ENCODE measurements at regions of chr16 and their contacts with region 1.

Region 1: GRCh38 chr16:50266337-50267091 is at the start of gene ADCY7:
- DNase-seq: peak; percentile 58 to 90 (median 88)
- ATAC-seq: peak; percentile 83
- H3K4me3 ChIP-seq: peak within 1 kb of the TSS; percentile 91 to 94
- H3K4me3 Mint-ChIP-seq: peak within 1 kb of the TSS; percentile 97
- H3K27ac ChIP-seq: peak within 1 kb of the TSS; percentile 77 to 86
- H3K27ac Mint-ChIP-seq: peak within 1 kb of the TSS; percentile 98
- H3K4me1 ChIP-seq: peaks cover 68% of the 10 kb centered on the region
- H3K4me1 Mint-ChIP-seq: peaks cover 71% of the 10 kb centered on the region
- H3K27me3 ChIP-seq: no peaks in the 10 kb centered on the region
- H3K27me3 Mint-ChIP-seq: no peaks in the 10 kb centered on the region
- CTCF ChIP-seq: no peak
- total RNA-seq, gene ADCY7: 117 to 126 TPM

Region 2: GRCh38 chr16:50065624-50066481 is 200.7 kb before region 1 on chr16 and contains the start of gene HEATR3:
- CTCF ChIA-PET with region 1: no interaction called
- POLR2A ChIA-PET with region 1: no interaction called
- intact Hi-C with region 1: loop called in 1 of 2 experiments (anchors 5 kb)
- DNase-seq: peak; percentile 88 to 97 (median 93)
- ATAC-seq: peak; percentile 86
- H3K4me3 ChIP-seq: peak within 1 kb of the TSS; percentile 78 to 92
- H3K4me3 Mint-ChIP-seq: peak within 1 kb of the TSS; percentile 93
- H3K27ac ChIP-seq: peak within 1 kb of the TSS; percentile 73 to 79
- H3K27ac Mint-ChIP-seq: peak within 1 kb of the TSS; percentile 92
- H3K4me1 ChIP-seq: peaks cover 17% of the 10 kb centered on the region
- H3K4me1 Mint-ChIP-seq: peaks cover 42% of the 10 kb centered on the region
- H3K27me3 ChIP-seq: no peaks in the 10 kb centered on the region
- H3K27me3 Mint-ChIP-seq: no peaks in the 10 kb centered on the region
- CTCF ChIP-seq: no peak
- total RNA-seq, gene HEATR3: 9.3 to 11.4 TPM

Region 3: GRCh38 chr16:50144211-50144610 is 122.3 kb before region 1 on chr16:
- CTCF ChIA-PET with region 1: no interaction called
- POLR2A ChIA-PET with region 1: no interaction called
- intact Hi-C with region 1: no loop called
- DNase-seq: no peak
- ATAC-seq: no peak
- H3K4me3 ChIP-seq: no peak overlapping the region
- H3K4me3 Mint-ChIP-seq: no peak overlapping the region
- H3K27ac ChIP-seq: no peak overlapping the region
- H3K27ac Mint-ChIP-seq: no peak overlapping the region
- H3K4me1 ChIP-seq: no peaks in the 10 kb centered on the region
- H3K4me1 Mint-ChIP-seq: no peaks in the 10 kb centered on the region
- H3K27me3 ChIP-seq: no peaks in the 10 kb centered on the region
- H3K27me3 Mint-ChIP-seq: no peaks in the 10 kb centered on the region
- CTCF ChIP-seq: no peak

Region 4: DNA sequence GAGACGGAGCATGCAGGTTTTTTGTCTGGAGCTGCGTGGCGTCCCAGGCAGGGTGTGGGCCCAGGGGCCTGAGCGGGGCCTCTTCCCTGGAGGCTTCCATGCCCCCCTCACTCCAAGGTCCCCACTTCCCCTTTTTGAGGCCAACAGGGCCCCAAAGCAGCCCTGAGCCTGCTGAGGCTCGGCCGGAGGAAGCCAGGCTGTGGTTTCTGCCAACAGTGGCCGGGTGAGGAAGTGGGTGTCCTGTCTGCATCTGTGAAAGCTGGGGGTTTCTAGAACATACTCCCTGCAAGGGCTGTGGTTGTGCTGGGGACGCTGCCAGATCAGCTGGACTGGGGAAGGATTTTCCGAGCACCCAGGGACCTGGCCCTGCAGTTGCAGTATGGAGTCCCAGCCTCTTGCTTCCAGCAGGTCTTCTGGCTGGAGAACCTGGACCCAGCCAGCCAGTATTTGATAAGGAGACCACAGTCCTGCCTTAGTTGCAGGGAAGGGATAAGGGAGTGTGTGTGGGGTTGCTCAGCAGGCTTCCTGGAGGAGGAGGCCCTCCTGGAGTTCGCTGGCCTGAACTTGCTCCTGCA is 15.5 kb after region 1 on chr16:
- CTCF ChIA-PET with region 1: interaction called, 155 read pairs
- POLR2A ChIA-PET with region 1: interaction called, 9 read pairs
- intact Hi-C with region 1: loop called (anchors 2 kb)
- DNase-seq: peak; percentile 43 to 88 (median 71)
- ATAC-seq: peak; percentile 62
- H3K4me3 ChIP-seq: peak overlapping the region; percentile 40 to 46
- H3K4me3 Mint-ChIP-seq: peak overlapping the region; percentile 76
- H3K27ac ChIP-seq: peak overlapping the region; percentile 46 to 70
- H3K27ac Mint-ChIP-seq: peak overlapping the region; percentile 89
- H3K4me1 ChIP-seq: peaks cover 90% of the 10 kb centered on the region
- H3K4me1 Mint-ChIP-seq: peaks cover 89% of the 10 kb centered on the region
- H3K27me3 ChIP-seq: no peaks in the 10 kb centered on the region
- H3K27me3 Mint-ChIP-seq: no peaks in the 10 kb centered on the region
- CTCF ChIP-seq: no peak

Region 5: GRCh38 chr16:50368410-50369132 is 102.1 kb after region 1 on chr16 and contains the start of gene BRD7:
- CTCF ChIA-PET with region 1: interaction called, 3 read pairs
- POLR2A ChIA-PET with region 1: no interaction called
- intact Hi-C with region 1: loop called in 1 of 2 experiments (anchors 5 kb)
- DNase-seq: peak; percentile 60 to 88 (median 71)
- ATAC-seq: peak; percentile 94
- H3K4me3 ChIP-seq: peak within 1 kb of the TSS; percentile 54 to 60
- H3K4me3 Mint-ChIP-seq: peak within 1 kb of the TSS; percentile 85
- H3K27ac ChIP-seq: peak within 1 kb of the TSS; percentile 56 to 79
- H3K27ac Mint-ChIP-seq: peak within 1 kb of the TSS; percentile 95
- H3K4me1 ChIP-seq: peaks cover 41% of the 10 kb centered on the region
- H3K4me1 Mint-ChIP-seq: peaks cover 52% of the 10 kb centered on the region
- H3K27me3 ChIP-seq: no peaks in the 10 kb centered on the region
- H3K27me3 Mint-ChIP-seq: no peaks in the 10 kb centered on the region
- CTCF ChIP-seq: no peak
- total RNA-seq, gene BRD7: 113 to 117 TPM

Region 6: DNA sequence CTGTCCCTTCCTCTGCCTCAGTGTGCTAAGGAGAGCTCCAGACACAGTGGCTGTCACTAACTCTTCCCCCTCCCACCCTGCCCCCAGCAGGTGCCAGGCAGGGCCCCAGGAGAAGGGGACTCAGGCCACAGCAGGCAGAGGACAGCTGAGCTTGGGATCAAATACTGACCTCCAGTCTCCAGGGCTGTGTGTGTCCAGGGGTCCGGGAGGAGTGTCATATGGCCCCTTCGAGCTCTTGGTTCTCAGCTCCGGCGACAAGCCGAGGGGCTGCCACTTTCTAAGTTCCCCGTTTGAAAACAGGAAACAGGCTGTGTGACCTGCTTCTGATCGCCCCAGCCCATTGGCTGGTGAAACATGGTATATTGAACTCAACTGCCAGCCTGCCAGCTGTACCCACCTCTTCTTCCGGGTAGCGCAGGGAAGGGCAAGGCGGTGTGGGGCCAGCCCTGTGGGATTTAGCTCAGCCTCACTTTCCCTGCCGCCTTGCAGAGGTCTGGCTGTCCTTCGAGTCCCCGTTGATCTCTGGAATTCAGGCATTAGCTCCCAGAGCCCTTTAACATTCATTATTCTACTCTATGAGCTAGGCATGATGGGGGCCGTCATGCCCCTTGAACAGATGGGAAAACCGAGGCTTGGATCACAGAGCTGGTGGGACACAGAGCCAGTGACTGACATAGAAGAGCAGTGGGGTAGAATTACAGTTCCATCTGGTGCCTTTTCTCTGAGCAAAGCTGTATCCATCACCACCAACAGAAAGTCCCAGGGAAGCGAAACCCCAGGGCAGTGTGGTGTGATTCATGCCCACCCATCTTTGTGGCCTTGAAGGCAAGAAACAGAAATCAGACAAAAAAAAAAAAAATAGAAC is 414.7 kb after region 1 on chr16 and contains the start of gene SNX20:
- CTCF ChIA-PET with region 1: no interaction called
- POLR2A ChIA-PET with region 1: no interaction called
- intact Hi-C with region 1: loop called in 1 of 2 experiments (anchors 5 kb)
- DNase-seq: peak; percentile 43 to 87 (median 72)
- ATAC-seq: peak; percentile 92
- H3K4me3 ChIP-seq: peak within 1 kb of the TSS; percentile 65 to 88
- H3K4me3 Mint-ChIP-seq: peak within 1 kb of the TSS; percentile 92
- H3K27ac ChIP-seq: peak within 1 kb of the TSS; percentile 51 to 86
- H3K27ac Mint-ChIP-seq: peak within 1 kb of the TSS; percentile 97
- H3K4me1 ChIP-seq: peaks cover 74% of the 10 kb centered on the region
- H3K4me1 Mint-ChIP-seq: peaks cover 85% of the 10 kb centered on the region
- H3K27me3 ChIP-seq: no peaks in the 10 kb centered on the region
- H3K27me3 Mint-ChIP-seq: no peaks in the 10 kb centered on the region
- CTCF ChIP-seq: no peak
- total RNA-seq, gene SNX20: 18.6 to 20.1 TPM